IMR-90 (cell line): ENCODE measurements at regions of chr2 and their contacts with region 1.

Region 1: GRCh38 chr2:152062125-152063091 is 36.4 kb downstream of the CACNB4 start:
- DNase-seq: peak; percentile 73
- ATAC-seq: peak; percentile 94
- H3K4me3 ChIP-seq: no peak overlapping the region
- H3K27ac ChIP-seq: peak overlapping the region; percentile 34
- H3K4me1 ChIP-seq: peaks cover 8% of the 10 kb centered on the region
- H3K27me3 ChIP-seq: peaks cover 1% of the 10 kb centered on the region; the same call in 1 of the 2 replicates
- CTCF ChIP-seq: no peak
- POLR2A ChIP-seq: no peak
- RAD21 ChIP-seq: no peak

Region 2: DNA sequence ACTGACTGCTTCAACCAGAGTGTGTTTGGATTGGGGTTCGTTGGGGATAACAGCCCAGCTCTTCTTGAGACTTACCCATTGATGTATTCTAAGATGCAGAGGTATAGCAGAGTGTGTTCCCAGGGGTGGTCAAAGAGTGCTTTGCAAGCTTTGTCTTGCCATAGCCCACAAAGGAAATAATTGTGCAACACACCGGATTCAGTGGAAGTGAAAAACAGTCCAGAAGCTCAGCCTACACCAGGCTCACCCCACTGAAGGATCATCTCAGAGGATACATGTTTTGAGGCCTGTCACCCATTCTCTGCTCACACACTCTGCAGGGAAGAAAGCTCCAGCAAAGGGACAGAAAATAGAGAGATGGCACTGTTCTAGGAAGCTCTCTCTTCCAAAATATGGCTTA is 26.8 kb after region 1 on chr2:
- CTCF ChIA-PET with region 1: interaction called, 3 read pairs
- POLR2A ChIA-PET with region 1: interaction called, 16 read pairs
- dilution Hi-C with region 1: no loop called
- in situ Hi-C with region 1: no loop called
- intact Hi-C with region 1: no loop called
- DNase-seq: no peak
- ATAC-seq: no peak
- H3K4me3 ChIP-seq: no peak overlapping the region
- H3K27ac ChIP-seq: no peak overlapping the region
- H3K4me1 ChIP-seq: no peaks in the 10 kb centered on the region
- H3K27me3 ChIP-seq: peaks cover 9% of the 10 kb centered on the region
- CTCF ChIP-seq: no peak
- POLR2A ChIP-seq: no peak
- RAD21 ChIP-seq: no peak